ENCODE measurements at regions of chr7 and their contacts with region 1.

Region 1: GRCh38 chr7:64463636-64464378 is 99.1 kb downstream of the ZNF680 start:
- DNase-seq: peak; percentile 85
- H3K4me3 ChIP-seq: peak overlapping the region; percentile 68 to 75
- H3K27ac ChIP-seq: peak overlapping the region; percentile 25 to 75; a peak in 3 of 4 replicates
- H3K4me1 ChIP-seq: no peaks in the 10 kb centered on the region; a peak in 2 of 4 replicates
- H3K27me3 ChIP-seq: no peaks in the 10 kb centered on the region
- CTCF ChIP-seq: no peak
- EP300 ChIP-seq: no peak
- RAD21 ChIP-seq: no peak

Region 2: DNA sequence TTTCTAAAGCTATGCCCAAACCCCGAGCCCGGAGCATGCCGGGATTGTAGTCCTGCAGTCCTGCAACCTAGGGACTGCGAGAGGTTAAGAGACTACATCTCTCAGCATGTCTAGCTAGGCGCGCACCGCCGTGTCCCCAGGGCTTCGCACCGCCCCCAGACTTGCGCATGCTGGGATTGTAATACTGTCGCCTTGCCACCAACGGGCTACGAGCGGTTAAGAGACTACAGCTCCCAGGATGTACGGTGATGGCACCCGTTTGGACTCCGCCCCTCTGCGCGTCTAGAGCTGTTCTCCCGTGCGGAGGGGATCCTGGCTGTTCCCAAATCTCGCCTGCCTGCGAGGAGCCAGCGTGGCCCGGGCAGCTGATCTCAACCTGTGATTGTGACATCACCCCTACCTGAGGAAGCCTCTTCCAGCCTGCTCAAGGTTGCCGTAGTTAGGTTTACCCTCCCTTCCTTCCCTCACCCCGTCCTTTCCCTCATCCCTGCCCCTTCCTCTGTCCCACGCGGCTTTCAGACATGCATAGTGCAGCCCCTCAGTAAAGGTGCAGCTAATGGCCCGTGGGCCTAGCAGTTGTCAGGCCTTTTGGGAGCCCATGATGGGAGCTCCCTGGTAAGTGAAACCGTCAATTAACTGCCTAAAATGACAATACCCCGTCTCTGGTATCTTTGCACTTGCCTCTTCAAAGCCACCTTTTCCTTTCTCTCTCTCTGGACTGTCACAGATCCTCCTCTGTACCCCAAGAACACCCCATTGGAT is 156.4 kb before region 1 on chr7:
- CTCF ChIA-PET with region 1: no interaction called
- POLR2A ChIA-PET with region 1: interaction called, 11 read pairs
- DNase-seq: peak; percentile 90
- H3K4me3 ChIP-seq: peak overlapping the region; percentile 66 to 76
- H3K27ac ChIP-seq: peak overlapping the region; percentile 16 to 86; a peak in 3 of 4 replicates
- H3K4me1 ChIP-seq: peaks cover 0 to 8% of the 10 kb centered on the region in 2 experiments; a peak in 2 of 4 replicates
- H3K27me3 ChIP-seq: no peaks in the 10 kb centered on the region
- CTCF ChIP-seq: no peak
- EP300 ChIP-seq: no peak
- RAD21 ChIP-seq: no peak

Region 3: GRCh38 chr7:64313740-64314491 is 149.9 kb before region 1 on chr7 and contains the start of gene ZNF736:
- CTCF ChIA-PET with region 1: no interaction called
- POLR2A ChIA-PET with region 1: interaction called, 10 read pairs
- DNase-seq: peak; percentile 91
- H3K4me3 ChIP-seq: peak within 1 kb of the TSS; percentile 80 to 89
- H3K27ac ChIP-seq: peak within 1 kb of the TSS; percentile 63 to 85
- H3K4me1 ChIP-seq: peaks cover 0 to 24% of the 10 kb centered on the region in 2 experiments; a peak in 2 of 4 replicates
- H3K27me3 ChIP-seq: no peaks in the 10 kb centered on the region
- CTCF ChIP-seq: no peak
- EP300 ChIP-seq: peak in 1 of 2 experiments; percentile 77; a peak in 2 of 4 replicates
- RAD21 ChIP-seq: no peak; the same call in 1 of the 2 replicates
- polyA plus RNA-seq, gene ZNF736: 4.0 and 7.3 TPM in 2 replicates

Region 4: GRCh38 chr7:64504581-64505120 is 40.8 kb after region 1 on chr7:
- CTCF ChIA-PET with region 1: no interaction called
- POLR2A ChIA-PET with region 1: no interaction called
- DNase-seq: peak; percentile 35
- H3K4me3 ChIP-seq: no peak overlapping the region
- H3K27ac ChIP-seq: peak overlapping the region in 1 of 2 experiments; percentile 29; a peak in 1 of 4 replicates
- H3K4me1 ChIP-seq: peaks cover 0 to 7% of the 10 kb centered on the region in 2 experiments; a peak in 2 of 4 replicates
- H3K27me3 ChIP-seq: no peaks in the 10 kb centered on the region
- CTCF ChIP-seq: no peak
- EP300 ChIP-seq: peak in 1 of 2 experiments; percentile 55; a peak in 1 of 4 replicates
- RAD21 ChIP-seq: no peak; the same call in 1 of the 2 replicates

Region 5: DNA sequence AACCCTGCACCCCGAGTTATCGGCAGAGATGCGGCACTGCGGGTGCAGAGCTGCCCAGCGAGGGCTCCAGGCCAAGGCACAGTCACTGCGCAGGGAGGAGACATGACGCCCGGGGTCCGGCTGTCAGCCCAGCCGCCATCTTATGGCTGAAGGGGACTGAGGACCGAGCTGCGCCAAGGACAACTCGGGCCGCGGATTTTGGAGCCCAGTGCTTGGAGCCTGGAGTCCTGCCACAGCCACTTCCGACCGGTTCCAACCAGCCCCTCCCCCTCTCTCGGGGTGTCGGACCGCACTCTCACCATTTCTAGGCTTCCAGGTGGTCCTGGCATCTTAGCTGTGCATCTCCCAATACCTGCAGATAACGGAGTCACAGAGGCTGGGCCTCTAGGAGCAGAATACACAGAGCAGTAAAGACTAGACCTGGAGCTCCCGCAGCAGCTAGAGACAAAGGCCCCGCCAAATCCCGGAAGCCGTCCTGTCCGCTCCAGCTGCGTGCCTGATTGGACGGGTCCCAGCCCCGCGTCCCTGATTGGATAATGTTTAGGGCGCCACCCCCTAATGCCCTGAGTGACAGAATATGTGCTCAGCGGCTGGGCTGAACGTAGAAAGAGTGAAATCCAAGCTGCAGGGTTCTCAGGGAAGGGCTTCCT is 98.9 kb after region 1 on chr7 and contains the start of gene ZNF680:
- CTCF ChIA-PET with region 1: no interaction called
- POLR2A ChIA-PET with region 1: interaction called, 12 read pairs
- DNase-seq: peak; percentile 94
- H3K4me3 ChIP-seq: peak within 1 kb of the TSS; percentile 70 to 85
- H3K27ac ChIP-seq: peak within 1 kb of the TSS; percentile 74 to 83
- H3K4me1 ChIP-seq: peaks cover 5 to 6% of the 10 kb centered on the region in 2 experiments; a peak in 2 of 4 replicates
- H3K27me3 ChIP-seq: no peaks in the 10 kb centered on the region
- CTCF ChIP-seq: no peak
- EP300 ChIP-seq: no peak
- RAD21 ChIP-seq: no peak
- polyA plus RNA-seq, gene ZNF680: 1.6 and 2.8 TPM in 2 replicates

Region 6: DNA sequence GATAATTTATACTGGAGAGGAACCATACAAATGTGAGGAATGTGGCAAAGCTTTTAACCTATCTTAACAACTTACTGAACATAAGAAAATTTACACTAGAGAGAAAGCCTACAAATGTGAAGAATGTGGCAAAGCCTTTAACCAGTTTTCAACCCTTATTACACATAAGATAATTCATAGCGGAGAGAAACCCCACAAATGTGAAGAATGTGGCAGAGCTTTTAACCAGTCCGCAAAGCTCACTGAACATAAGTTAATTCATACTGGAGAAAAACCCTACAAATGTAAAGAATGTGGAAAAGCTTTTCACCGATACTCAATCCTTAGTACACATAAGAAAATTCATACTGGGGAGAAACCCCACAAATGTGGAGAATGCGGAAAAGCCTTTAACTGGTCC is 368.3 kb after region 1 on chr7:
- CTCF ChIA-PET with region 1: no interaction called
- POLR2A ChIA-PET with region 1: no interaction called
- DNase-seq: no peak
- H3K4me3 ChIP-seq: no peak overlapping the region
- H3K27ac ChIP-seq: no peak overlapping the region
- H3K4me1 ChIP-seq: no peaks in the 10 kb centered on the region
- H3K27me3 ChIP-seq: no peaks in the 10 kb centered on the region
- CTCF ChIP-seq: no peak
- EP300 ChIP-seq: no peak
- RAD21 ChIP-seq: no peak